KBM-7 (cell line): ENCODE measurements at regions of chr9 and their contacts with region 1.

Region 1: DNA sequence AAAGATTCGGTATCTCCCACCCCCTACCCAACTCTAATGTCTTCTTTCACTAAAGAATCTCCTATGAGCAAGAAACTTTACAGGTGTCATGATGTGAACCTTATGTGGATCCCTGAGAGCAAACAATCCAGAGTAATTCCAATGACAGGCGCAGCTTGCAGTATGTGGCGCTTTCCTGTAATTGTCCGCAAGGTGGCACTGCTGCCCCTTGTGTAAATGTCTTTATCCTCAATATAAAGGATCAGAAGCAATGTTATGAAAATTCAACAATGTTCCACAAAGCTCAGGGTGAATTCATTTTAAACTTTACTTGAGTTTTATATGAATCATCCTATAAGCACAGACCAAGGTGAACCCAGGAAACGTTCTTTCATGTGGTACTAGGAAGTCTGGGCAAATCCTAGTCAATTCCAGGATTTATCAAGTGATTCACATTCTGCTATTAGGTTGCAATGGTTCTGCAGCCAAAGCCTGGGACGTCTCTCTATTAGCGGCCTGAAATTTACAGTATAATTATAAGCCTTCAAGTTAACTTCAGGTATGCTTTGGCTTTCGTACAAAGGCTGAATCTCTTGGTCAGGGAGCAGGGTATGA is 113.7 kb downstream of the TRPM6 start:
- DNase-seq: peak; percentile 77

Region 2: GRCh38 chr9:74528207-74528606 is 245.8 kb before region 1 on chr9:
- in situ Hi-C with region 1: no loop called
- DNase-seq: no peak

Region 3: GRCh38 chr9:75071530-75072124 is 297.6 kb after region 1 on chr9:
- in situ Hi-C with region 1: loop called (anchors 10 kb)
- DNase-seq: no peak